ENCODE measurements at regions of chr20 and their contacts with region 1.

Region 1: DNA sequence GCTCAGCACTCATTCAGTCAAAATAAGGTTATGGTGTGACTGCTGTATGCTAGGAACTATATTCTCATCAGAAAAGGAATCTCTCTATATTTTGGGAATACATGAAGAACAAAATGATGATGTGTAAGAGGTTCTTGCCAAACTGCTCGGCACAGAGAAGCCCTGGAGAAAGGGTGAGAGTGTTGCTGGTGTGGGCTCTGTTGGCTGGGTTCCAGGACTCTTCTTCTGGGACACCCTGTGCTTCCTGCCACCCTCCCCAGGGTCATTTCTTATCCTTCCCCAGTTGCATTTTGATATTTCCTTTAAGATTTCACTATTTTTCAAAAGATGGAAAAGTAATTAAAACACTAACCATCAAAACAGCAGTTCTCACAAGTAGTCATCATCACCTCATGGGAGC is 28.8 kb downstream of the CST1 start:
- DNase-seq: no peak
- H3K4me3 ChIP-seq: no peak overlapping the region
- H3K27ac ChIP-seq: no peak overlapping the region
- H3K4me1 ChIP-seq: no peaks in the 10 kb centered on the region
- H3K27me3 ChIP-seq: no peaks in the 10 kb centered on the region
- CTCF ChIP-seq: no peak

Region 2: DNA sequence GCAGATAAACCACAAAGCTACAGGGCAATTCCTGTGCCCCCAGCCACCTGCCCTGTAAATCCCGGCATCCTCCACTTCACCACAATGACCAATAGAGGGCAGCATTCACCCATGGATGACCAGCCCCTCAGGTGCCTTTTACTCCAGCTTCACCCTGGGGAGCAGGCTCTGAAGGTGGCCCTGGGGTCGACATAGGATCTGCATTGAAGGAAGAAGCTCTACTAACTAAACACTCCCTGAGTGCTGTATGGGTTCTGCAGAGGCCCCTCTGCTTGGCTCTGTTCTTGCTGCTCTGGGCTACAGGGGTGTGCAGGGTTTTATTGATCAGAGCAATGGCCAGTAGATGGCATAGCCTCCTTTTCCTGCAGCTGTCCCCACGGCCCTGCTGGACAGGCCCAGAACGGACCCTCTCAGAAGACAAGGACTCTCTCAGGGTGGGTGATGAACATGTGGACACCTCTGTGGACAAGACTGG is 53.4 kb before region 1 on chr20:
- CTCF ChIA-PET with region 1: no interaction called
- dilution Hi-C with region 1: no loop called
- in situ Hi-C with region 1: no loop called
- intact Hi-C with region 1: loop called (anchors 2 kb)
- DNase-seq: peak; percentile 49
- H3K4me3 ChIP-seq: no peak overlapping the region
- H3K27ac ChIP-seq: no peak overlapping the region
- H3K4me1 ChIP-seq: no peaks in the 10 kb centered on the region
- H3K27me3 ChIP-seq: no peaks in the 10 kb centered on the region
- CTCF ChIP-seq: peak; percentile 81 to 86

Region 3: DNA sequence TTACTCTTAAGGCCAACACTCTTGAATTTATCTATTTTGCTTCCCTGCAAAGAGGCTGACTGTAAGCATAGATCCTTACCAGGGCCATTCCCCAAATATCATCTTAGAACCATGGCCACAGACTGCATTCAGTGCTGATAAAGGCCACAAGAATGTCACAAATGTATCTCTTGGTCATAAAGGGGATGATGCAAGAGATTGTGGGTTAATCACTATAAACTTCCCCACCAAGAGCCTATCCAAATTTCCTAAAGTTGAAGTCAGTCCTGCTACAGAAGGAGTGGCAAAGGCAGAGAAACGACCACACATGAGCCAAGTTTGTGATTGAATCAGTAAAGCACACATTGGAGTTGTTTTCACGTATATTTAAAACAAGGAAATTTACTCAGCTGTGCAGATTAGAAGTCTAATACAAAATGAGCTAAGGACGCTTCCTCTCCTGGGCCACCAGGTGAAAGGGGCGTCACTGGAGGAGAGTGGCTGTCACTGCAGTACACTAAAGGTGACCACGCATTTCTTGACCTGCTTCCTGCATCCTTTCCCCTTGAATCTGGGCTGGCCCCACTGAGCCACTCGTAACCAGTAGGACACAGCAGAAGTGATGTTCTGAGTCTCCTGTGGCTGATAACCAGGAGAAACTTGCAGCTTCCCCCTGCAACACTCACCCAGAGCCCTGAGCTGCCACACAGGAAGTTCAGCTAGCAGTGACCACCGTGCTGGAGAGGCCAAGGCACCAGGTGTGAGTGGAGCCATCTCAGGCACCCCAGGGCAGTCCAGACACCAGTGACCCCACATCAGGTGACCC is 929.4 kb after region 1 on chr20:
- CTCF ChIA-PET with region 1: no interaction called
- dilution Hi-C with region 1: no loop called
- in situ Hi-C with region 1: no loop called
- intact Hi-C with region 1: no loop called
- DNase-seq: peak; percentile 59
- H3K4me3 ChIP-seq: no peak overlapping the region
- H3K27ac ChIP-seq: no peak overlapping the region
- H3K4me1 ChIP-seq: peaks cover 6% of the 10 kb centered on the region
- H3K27me3 ChIP-seq: no peaks in the 10 kb centered on the region
- CTCF ChIP-seq: no peak

Measured in mammary epithelial cell (primary cell).